HCT116 (cell line): ENCODE measurements at regions of chr7 and their contacts with region 1.

Region 1: GRCh38 chr7:47266131-47266706 is 315.7 kb downstream of the TNS3 start:
- DNase-seq: peak; percentile 32
- ATAC-seq: peak; percentile 95
- H3K4me3 ChIP-seq: no peak overlapping the region
- H3K27ac ChIP-seq: no peak overlapping the region
- H3K4me1 ChIP-seq: 0 out of 4 replicates have a peak, but pooled peaks cover 0 to 3% of the 10 kb centered on the region in 2 experiments
- H3K27me3 ChIP-seq: no peaks in the 10 kb centered on the region
- CTCF ChIP-seq: peak; percentile 79 to 96 (median 90)
- POLR2A ChIP-seq: no peak
- RAD21 ChIP-seq: peak; percentile 96

Region 2: DNA sequence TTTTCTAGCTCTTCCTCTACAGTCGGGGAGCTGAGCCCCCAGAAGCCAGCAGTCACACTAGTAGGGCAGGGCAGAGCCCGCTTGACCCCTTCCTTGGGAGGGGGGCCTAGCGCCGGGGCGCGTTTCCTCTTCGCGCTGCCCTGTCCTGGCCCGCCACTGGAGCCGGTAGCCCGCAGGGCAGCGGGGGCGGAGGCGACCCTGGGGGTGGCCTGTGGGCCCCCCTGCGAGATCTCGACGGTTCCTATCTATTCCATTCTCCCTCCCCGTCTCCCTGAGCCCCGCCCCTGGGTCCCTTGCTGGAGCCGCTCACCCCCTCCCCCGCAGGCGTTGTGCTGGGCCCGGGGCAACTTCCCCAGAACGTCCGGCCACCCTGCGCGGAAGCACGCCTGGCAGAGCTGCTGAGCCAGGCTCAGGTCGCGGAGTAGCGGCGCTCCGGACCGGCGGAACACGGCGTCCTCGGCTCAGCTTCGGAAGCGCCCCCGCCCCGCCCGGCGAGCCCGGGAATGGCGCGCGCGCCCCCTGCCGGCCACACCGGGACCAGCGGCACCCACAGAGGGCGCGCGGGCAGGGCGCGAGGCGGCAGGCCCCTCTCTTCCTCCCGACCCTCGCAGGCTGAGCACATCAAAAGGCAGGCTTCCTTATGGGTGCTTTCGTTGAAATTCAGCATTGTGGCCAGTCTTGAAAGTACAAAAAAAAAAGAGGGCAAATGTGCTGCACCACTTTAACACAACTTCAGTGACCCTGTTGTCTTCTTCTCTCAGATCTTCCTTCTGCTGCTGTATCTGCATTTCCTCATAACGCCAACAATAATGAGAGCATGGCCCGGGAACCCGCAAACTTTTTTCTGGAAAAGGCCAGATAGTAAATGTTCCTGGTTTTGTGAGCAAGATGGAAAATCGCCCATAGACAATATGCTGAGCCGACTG is 11.9 kb before region 1 on chr7:
- CTCF ChIA-PET with region 1: interaction called, 15 read pairs
- POLR2A ChIA-PET with region 1: no interaction called
- RAD21 ChIA-PET with region 1: no interaction called
- intact Hi-C with region 1: no loop called
- DNase-seq: no peak
- ATAC-seq: peak; percentile 87
- H3K4me3 ChIP-seq: peak overlapping the region; percentile 57 to 65
- H3K27ac ChIP-seq: peak overlapping the region; percentile 72
- H3K4me1 ChIP-seq: peaks cover 8 to 18% of the 10 kb centered on the region in 2 experiments
- H3K27me3 ChIP-seq: no peaks in the 10 kb centered on the region
- CTCF ChIP-seq: peak; percentile 67 to 89 (median 75)
- POLR2A ChIP-seq: no peak
- RAD21 ChIP-seq: peak; percentile 64

Region 3: GRCh38 chr7:47435889-47436312 is 169.7 kb after region 1 on chr7:
- CTCF ChIA-PET with region 1: interaction called, 52 read pairs
- POLR2A ChIA-PET with region 1: interaction called, 4 read pairs
- RAD21 ChIA-PET with region 1: interaction called, 14 to 17 read pairs
- intact Hi-C with region 1: loop called (anchors 1 kb)
- DNase-seq: peak; percentile 70
- ATAC-seq: peak; percentile 98
- H3K4me3 ChIP-seq: no peak overlapping the region
- H3K27ac ChIP-seq: no peak overlapping the region
- H3K4me1 ChIP-seq: peaks cover 0 to 5% of the 10 kb centered on the region in 2 experiments; a peak in 2 of 4 replicates
- H3K27me3 ChIP-seq: no peaks in the 10 kb centered on the region
- CTCF ChIP-seq: peak; percentile 69 to 80 (median 75)
- POLR2A ChIP-seq: no peak
- RAD21 ChIP-seq: peak; percentile 89

Region 4: DNA sequence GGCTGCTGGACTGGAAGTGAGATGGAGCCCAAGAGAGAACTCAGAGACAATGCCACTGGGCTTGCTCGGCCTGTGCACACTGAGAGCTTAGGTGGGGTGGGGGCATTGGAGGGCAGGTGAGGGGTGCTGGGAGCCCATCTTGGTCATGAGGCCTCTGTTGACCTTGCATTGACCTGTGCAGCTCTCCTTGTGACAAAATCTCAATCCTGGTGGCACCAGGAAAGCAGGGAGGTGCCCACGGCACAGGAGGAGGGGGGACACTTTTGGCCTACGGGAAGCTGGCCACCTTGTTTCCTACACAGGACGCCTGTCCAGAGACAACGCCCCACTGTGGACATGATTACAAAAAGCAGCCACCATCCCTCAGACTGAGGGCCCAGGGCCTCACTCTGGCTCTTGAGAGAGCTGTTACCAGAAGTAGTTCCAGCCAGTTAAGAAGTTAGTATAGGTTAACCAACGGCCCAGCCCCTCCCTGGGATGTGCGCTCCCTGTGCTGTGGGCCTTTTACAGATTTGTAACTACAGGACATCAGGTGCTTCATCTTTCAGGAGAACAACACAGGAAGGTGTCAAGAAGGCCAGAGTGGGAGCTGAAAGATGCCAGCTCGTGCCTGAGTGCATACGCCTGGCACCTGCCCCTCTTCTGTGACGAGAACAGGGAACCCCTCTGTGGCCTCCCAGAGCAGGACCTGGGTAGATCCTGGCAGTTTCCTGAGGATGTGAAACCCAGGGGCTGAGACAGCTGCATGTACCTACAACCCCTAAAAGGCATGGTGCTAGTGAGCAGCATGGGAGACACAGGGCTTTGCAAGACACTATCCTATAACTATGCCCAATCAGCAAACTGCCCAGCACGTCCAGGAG is 671.7 kb after region 1 on chr7:
- CTCF ChIA-PET with region 1: interaction called, 15 read pairs
- POLR2A ChIA-PET with region 1: no interaction called
- RAD21 ChIA-PET with region 1: interaction called, 3 to 7 read pairs
- intact Hi-C with region 1: no loop called
- DNase-seq: no peak
- ATAC-seq: no peak; the same call in 1 of the 2 replicates
- H3K4me3 ChIP-seq: no peak overlapping the region
- H3K27ac ChIP-seq: no peak overlapping the region
- H3K4me1 ChIP-seq: peaks cover 0 to 9% of the 10 kb centered on the region in 2 experiments; a peak in 2 of 4 replicates
- H3K27me3 ChIP-seq: no peaks in the 10 kb centered on the region
- CTCF ChIP-seq: no peak
- POLR2A ChIP-seq: no peak
- RAD21 ChIP-seq: no peak

Region 5: DNA sequence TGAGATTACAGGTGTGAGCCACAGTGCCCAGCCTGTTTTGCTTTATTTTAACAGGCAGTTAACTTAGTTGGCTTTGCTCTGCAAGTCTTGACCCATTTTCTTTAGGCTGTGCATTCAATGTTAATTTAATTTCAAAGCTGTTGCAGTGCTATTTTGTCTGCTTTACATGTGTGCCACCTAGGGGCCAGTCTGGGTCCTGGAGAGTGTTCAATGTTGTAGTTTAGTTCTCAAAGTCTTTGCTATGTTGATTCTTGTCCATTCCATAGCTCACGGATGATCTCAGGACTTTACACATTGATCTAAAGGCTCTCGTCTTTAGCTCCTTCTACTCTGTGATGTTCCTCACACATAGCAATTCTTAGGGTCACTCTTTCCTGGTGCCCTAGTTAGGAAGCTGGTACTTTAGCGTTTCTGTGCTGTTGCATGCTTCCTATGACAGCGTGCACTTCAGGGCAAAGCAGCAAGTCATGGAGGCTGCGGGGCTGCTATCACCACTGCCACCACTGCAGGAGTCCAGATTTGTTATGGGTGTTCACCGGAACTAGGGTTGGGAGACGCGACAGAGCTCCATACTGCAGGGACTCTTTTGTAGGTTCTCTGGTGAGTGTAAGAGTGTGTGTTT is 888.7 kb after region 1 on chr7:
- CTCF ChIA-PET with region 1: interaction called, 7 read pairs
- POLR2A ChIA-PET with region 1: no interaction called
- RAD21 ChIA-PET with region 1: no interaction called
- intact Hi-C with region 1: loop called (anchors 10 kb)
- DNase-seq: peak; percentile 28
- ATAC-seq: peak; percentile 95
- H3K4me3 ChIP-seq: no peak overlapping the region
- H3K27ac ChIP-seq: no peak overlapping the region
- H3K4me1 ChIP-seq: no peaks in the 10 kb centered on the region
- H3K27me3 ChIP-seq: peaks cover 15% of the 10 kb centered on the region
- CTCF ChIP-seq: peak; percentile 69 to 75 (median 73); a peak in 5 of 6 replicates
- POLR2A ChIP-seq: no peak
- RAD21 ChIP-seq: peak; percentile 84

Region 6: DNA sequence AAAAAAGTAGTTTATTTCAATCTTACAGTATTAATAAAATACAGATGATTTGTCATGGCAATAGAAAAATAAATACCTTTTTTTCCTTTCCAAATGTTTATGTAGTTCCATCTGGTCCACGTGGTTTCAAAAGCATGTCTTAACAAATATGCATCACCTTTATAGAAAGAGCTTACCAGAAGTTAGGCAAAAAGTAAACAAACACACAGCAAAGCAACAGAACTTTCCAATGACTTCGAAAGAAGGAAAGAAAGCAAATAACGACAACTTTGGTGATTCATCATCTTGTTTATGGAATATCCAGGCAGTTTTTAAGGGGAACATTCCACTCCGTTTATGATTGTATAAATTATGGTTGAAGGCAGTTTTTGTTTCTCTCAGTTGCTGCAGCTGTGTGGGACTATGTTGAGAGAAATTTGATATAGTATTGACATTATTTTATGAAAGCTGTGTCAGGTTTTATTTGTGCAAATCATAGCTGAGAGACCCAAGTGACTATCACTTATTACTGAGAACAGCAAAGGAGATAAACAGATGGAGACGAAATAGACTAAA is 1861.2 kb after region 1 on chr7:
- CTCF ChIA-PET with region 1: no interaction called
- POLR2A ChIA-PET with region 1: no interaction called
- RAD21 ChIA-PET with region 1: no interaction called
- intact Hi-C with region 1: no loop called
- DNase-seq: no peak
- ATAC-seq: no peak
- H3K4me3 ChIP-seq: no peak overlapping the region
- H3K27ac ChIP-seq: no peak overlapping the region
- H3K4me1 ChIP-seq: no peaks in the 10 kb centered on the region
- H3K27me3 ChIP-seq: no peaks in the 10 kb centered on the region
- CTCF ChIP-seq: no peak
- POLR2A ChIP-seq: no peak
- RAD21 ChIP-seq: no peak